Activated B cell treated with CpG ODN at 0.5 μM for 24 hours (primary cell): ENCODE measurements at regions of chr12 and their contacts with region 1.

Region 1: DNA sequence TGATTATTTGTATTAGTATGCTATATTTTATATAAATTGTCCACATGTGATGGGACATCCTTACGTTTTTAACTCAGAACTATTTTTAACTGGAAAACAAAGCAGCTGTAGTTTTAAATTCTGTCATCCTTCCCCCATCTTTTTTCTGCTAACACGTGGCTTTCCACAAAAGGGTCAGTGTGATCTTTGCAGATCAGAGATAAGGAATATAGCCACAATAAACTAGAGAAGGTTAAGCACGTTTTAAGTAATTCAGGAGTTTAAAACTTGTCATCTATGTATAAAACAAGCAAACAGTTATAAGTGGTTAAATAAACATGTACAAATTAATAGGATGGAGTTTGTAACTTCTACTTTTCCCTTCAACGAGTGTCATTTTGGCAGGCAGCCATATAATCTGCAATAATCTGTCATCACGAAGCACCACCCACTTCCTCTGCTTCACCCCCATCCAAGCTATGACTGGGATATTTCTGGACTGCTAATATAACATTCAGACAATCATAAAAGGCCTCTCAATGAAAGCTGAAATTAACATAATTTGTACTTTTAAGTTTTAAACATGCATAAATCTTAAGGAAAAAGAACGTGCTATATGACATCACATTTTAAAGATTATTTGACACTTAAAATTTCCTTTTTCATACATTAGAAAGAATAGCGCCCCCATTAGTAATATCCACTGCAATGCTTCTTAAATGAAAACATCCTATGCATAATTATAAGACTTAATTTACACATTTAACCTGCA is 15.3 kb downstream of the TAOK3 start:
- DNase-seq: no peak
- ATAC-seq: peak; percentile 64
- H3K4me3 Mint-ChIP-seq: peak overlapping the region; percentile 72
- H3K27ac Mint-ChIP-seq: peak overlapping the region; percentile 83
- H3K4me1 Mint-ChIP-seq: peaks cover 61% of the 10 kb centered on the region
- H3K27me3 Mint-ChIP-seq: no peaks in the 10 kb centered on the region
- CTCF ChIP-seq: no peak

Region 2: DNA sequence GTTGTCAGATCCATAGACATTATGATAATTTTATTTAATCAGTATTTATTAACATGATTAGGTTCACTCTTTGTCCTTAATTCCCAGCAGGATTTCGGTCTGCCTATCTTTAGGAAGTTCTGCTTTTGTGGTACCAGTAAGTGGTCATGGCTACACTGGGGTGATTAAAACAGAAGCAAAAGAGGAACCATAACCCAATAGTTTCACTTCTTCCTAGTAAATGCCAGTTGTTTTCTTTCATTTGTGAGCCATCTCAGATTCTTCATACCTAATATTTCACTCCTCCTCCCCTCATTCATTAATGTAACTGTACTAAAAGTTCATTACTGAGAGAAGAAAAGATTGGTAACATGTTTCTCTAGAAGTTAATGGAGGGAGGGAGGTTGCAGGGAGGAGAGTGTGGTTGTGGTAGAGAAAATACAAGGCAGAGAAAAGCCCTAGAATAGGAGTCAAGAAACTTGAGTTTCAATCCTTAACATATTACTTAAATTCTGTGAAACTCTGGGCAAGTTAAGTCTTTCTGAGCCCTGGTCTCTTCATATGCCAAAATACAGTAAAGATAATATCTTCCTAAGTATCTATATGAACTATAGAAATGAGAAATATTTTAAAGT is 120.3 kb before region 1 on chr12:
- CTCF ChIA-PET with region 1: interaction called, 4 read pairs
- POLR2A ChIA-PET with region 1: interaction called, 4 read pairs
- intact Hi-C with region 1: loop called (anchors 5 kb)
- DNase-seq: no peak
- ATAC-seq: peak; percentile 90
- H3K4me3 Mint-ChIP-seq: peak overlapping the region; percentile 77
- H3K27ac Mint-ChIP-seq: peak overlapping the region; percentile 89
- H3K4me1 Mint-ChIP-seq: peaks cover 45% of the 10 kb centered on the region
- H3K27me3 Mint-ChIP-seq: no peaks in the 10 kb centered on the region
- CTCF ChIP-seq: no peak

Region 3: GRCh38 chr12:118330421-118331018 is 26.9 kb before region 1 on chr12:
- CTCF ChIA-PET with region 1: no interaction called
- POLR2A ChIA-PET with region 1: interaction called, 8 read pairs
- intact Hi-C with region 1: loop called (anchors 1 kb)
- DNase-seq: no peak
- ATAC-seq: peak; percentile 86
- H3K4me3 Mint-ChIP-seq: peak overlapping the region; percentile 60
- H3K27ac Mint-ChIP-seq: peak overlapping the region; percentile 93
- H3K4me1 Mint-ChIP-seq: peaks cover 61% of the 10 kb centered on the region
- H3K27me3 Mint-ChIP-seq: no peaks in the 10 kb centered on the region
- CTCF ChIP-seq: no peak

Region 4: DNA sequence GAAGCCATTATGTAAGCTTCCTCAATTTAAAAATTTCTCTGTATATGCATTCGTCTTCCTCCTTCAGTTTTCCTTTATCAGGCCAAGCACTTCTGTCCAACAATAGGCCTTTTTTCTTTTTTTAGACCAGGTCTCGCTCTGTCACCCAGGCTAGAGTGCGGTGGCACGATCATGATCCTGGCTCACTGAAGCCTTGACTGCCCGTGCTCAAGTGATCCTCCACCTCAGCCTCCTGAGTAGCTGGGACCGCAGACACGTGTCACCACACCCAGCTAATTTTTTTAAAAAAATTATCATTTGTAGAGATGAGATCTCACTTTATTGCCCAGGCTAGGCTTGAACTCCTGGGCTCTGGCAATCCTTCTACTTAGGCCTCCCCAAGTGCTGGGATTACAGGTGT is 10.5 kb before region 1 on chr12:
- CTCF ChIA-PET with region 1: interaction called, 4 read pairs
- POLR2A ChIA-PET with region 1: interaction called, 42 read pairs
- intact Hi-C with region 1: loop called (anchors 1 kb)
- DNase-seq: peak; percentile 24
- ATAC-seq: peak; percentile 92
- H3K4me3 Mint-ChIP-seq: peak overlapping the region; percentile 73
- H3K27ac Mint-ChIP-seq: peak overlapping the region; percentile 91
- H3K4me1 Mint-ChIP-seq: peaks cover 55% of the 10 kb centered on the region
- H3K27me3 Mint-ChIP-seq: no peaks in the 10 kb centered on the region
- CTCF ChIP-seq: no peak